ENCODE measurements at regions of chr11 and their contacts with region 1.

Region 1: DNA sequence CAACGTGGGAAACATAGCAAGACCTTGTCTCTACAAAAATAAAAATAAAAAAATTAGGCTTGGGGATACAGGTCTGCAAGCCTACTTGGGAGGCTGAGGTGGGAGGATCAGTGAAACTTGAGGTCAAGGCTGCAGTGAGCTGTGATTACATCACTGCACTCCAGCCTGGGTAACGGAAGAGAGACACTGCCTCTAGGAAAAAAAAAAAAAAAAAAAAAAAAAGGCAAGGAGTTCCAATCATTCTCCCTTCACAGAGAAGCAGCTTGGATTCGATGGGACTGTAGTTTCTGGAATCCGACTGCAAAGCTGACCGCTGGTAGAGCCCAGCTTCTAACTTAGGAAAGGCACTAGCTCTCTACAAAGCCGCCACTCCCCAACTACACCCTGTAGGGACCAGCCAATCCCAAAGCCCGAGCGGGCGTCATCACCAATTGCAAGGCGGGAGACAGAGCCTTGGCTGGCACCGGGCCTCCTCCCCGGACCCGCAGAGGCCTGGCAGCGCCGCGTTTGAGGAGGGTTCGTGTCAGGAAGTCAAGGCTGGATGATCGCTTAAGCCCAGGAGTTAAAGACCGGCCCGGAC is 699 bp upstream of the DDB2 start:
- DNase-seq: peak; percentile 64 to 85 (median 76)
- ATAC-seq: peak; percentile 86
- H3K4me3 ChIP-seq: peak overlapping the region; percentile 89
- H3K4me3 Mint-ChIP-seq: peak overlapping the region; percentile 92 to 100 (median 96)
- H3K27ac ChIP-seq: peak overlapping the region; percentile 85
- H3K27ac Mint-ChIP-seq: peak overlapping the region; percentile 96 to 100 (median 99)
- H3K4me1 ChIP-seq: peaks cover 3 to 21% of the 10 kb centered on the region in 2 donors
- H3K4me1 Mint-ChIP-seq: peaks cover 26 to 39% (median 32%) of the 10 kb centered on the region in 7 donors
- H3K27me3 ChIP-seq: no peaks in the 10 kb centered on the region
- H3K27me3 Mint-ChIP-seq: no peaks in the 10 kb centered on the region

Region 2: DNA sequence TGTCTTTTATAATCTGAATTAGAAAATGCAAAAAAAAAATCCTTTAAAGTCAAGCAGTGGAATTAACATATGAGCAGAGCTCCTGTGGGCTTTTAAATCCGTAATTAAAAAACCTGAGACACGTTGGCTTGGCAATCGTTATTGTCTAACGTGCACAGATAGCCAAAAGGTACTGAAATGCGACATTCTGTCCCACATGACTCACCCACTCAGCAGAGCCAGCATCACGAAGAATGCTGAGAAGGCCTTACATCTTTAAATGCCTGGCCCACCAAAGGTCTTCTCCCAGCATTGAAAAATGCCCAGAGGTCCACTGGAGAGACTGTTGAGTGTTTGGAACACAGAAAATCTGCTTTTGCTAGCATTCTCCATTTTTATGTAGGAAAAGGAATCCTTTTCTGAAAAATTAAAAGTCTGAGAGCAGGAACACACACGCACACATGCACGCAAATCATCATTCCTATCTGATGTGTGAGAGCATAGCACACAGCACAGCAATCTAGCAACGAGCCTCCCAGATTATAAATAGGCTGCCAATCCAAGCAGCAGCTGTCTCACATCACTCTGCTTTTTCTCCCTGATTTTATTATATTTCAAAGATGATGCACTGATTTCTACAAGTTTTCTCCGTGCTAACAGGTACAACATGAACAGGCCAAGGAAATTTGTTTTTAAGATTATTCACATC is 1187.3 kb before region 1 on chr11:
- CTCF ChIA-PET with region 1: no interaction called
- POLR2A ChIA-PET with region 1: no interaction called
- intact Hi-C with region 1: no loop called
- DNase-seq: no peak
- ATAC-seq: no peak
- H3K4me3 ChIP-seq: no peak overlapping the region
- H3K4me3 Mint-ChIP-seq: no peak overlapping the region
- H3K27ac ChIP-seq: no peak overlapping the region
- H3K27ac Mint-ChIP-seq: no peak overlapping the region
- H3K4me1 ChIP-seq: no peaks in the 10 kb centered on the region
- H3K4me1 Mint-ChIP-seq: peaks cover 0 to 9% (median 4%) of the 10 kb centered on the region in 7 donors
- H3K27me3 ChIP-seq: no peaks in the 10 kb centered on the region
- H3K27me3 Mint-ChIP-seq: no peaks in the 10 kb centered on the region

Region 3: DNA sequence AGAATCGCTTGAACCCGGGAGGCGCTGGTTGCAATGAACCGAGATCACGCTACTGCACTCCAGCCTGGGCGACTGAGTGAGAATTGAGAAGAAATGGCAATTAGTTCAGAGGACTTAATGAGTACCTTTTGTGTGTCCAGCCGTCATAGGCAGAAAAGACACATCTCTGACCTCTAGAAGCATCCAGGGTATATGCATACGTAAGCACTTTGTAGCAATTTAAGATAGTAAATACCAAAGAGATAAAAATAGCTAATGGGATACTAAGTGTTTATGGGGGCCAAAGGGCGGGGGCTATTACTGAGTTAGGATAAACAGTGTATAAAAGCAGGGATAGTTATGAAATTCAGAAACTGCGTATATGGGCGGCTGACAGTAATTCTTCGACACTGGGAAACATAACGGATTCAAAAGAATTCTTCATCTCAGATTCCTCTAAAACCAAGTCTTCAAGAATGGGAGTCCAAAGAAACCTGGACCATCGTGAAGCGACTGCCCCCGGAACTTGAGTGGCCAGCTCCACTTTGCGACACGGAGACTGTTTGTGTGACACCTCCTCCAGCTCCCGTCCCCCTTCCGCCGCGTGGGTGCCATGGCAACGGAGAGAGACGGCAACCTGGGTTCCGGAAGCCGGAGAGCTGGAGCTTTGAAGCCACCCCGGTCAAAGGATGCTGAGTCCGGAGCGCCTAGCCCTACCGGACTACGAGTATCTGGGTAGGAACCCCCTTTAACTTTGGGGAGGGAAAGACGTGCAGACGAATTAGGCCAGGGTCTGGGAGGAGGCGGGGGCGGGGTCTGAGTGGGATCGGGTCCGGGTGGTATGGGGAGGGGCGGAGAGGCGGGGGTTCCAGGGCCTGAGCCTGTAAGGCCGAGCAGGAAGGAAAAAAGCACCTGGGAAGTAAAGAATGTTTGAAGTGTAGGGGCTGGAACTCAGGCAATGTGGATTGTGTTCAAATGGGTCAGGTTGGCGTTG is 277.7 kb before region 1 on chr11 and contains the start of gene CSTPP1:
- CTCF ChIA-PET with region 1: no interaction called
- POLR2A ChIA-PET with region 1: no interaction called
- intact Hi-C with region 1: loop called (anchors 1 kb)
- DNase-seq: peak; percentile 80 to 92 (median 89)
- ATAC-seq: peak; percentile 99
- H3K4me3 ChIP-seq: peak within 1 kb of the TSS; percentile 76
- H3K4me3 Mint-ChIP-seq: peak within 1 kb of the TSS; percentile 86 to 100 (median 92)
- H3K27ac ChIP-seq: peak within 1 kb of the TSS; percentile 72
- H3K27ac Mint-ChIP-seq: peak within 1 kb of the TSS; percentile 89 to 98 (median 92)
- H3K4me1 ChIP-seq: peaks cover 0 to 11% of the 10 kb centered on the region in 2 donors
- H3K4me1 Mint-ChIP-seq: peaks cover 5 to 24% (median 21%) of the 10 kb centered on the region in 7 donors
- H3K27me3 ChIP-seq: no peaks in the 10 kb centered on the region
- H3K27me3 Mint-ChIP-seq: peaks cover 8 to 19% (median 9%) of the 10 kb centered on the region in 5 donors
- total RNA-seq, gene CSTPP1: 9.3 to 18.6 (median 16.1) TPM

Region 4: DNA sequence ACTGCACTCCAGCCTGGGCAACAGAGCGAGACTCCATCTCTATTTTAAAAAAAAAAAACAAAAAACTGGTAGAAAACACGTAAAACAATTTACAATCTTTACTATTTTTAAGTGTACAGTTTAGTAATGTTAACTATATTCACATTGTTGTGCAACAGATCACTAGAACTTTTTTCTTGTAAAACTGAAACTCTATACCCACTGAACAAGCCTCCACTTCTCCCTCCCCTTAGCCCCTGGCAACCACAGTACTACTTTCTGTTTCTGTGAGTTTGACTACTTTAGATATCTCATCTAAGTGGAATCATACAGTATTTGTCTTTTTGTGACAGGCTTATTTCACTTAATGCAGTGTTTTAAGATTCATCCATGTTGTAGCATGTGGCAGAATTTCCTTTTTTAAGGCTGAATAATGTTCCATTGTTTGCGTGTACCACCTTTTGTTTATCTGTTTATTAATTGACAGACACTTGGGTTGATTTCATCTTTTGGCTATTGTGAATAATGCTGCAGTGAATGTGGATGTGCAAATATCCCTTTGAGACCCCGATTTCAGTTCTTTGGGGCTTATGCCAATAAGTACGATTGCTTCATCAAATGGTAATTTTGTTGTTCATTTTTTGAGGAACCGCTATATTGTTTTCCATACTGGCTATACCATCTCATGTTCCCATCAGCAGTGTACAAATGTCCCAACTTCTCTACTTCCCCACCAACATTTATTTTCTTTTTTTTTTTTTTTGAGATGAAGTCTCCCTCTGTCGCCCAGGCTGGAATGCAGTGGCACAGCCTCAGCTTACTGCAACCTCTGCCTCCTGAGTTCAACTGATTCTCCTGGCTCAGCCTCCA is 11.7 kb after region 1 on chr11:
- CTCF ChIA-PET with region 1: no interaction called
- POLR2A ChIA-PET with region 1: interaction called, 5 read pairs
- intact Hi-C with region 1: loop called in 1 of 2 experiments (anchors 1 kb)
- DNase-seq: no peak
- ATAC-seq: peak; percentile 57
- H3K4me3 ChIP-seq: no peak overlapping the region
- H3K4me3 Mint-ChIP-seq: peak overlapping the region in 1 of 10 donors; percentile 70
- H3K27ac ChIP-seq: no peak overlapping the region
- H3K27ac Mint-ChIP-seq: peak overlapping the region in 3 of 9 donors; percentile 32 to 82 (median 66)
- H3K4me1 ChIP-seq: no peaks in the 10 kb centered on the region
- H3K4me1 Mint-ChIP-seq: peaks cover 0 to 28% (median 4%) of the 10 kb centered on the region in 7 donors
- H3K27me3 ChIP-seq: no peaks in the 10 kb centered on the region
- H3K27me3 Mint-ChIP-seq: no peaks in the 10 kb centered on the region

Region 5: DNA sequence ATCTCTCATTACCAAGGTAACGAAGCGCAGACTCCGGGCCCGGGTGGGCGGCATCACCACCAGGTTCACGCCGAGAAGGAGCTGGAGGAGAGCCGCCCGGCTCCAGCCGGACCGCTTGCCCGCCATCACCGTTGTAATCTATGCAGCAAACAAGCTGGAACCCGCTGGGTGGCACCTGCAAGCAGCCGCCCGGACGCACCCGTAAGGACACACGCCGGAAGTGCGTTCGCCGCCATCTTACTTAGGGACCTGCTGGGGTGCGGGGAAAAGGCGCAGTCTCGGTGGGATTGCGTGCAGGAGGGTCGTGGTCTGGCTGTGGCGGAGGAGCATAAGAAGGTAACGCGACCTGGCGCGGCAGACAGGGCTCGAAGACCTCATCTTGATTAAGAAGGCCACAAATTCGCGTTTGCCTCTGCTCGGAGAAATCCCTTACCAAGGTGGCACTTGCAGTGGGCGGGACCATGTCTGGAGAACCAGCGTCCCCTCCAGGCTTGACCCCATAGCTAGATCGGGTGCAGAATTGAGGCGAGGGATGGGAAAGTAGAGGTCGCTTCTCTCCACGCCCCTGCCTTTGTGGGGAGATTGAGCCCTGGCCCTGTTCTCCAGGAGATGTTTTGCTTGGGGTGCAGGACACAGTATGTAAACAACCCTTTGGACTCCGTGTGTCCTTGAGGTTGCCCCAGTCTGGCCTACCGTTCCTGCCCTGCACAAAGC is 34.7 kb after region 1 on chr11 and contains the start of gene ACP2:
- CTCF ChIA-PET with region 1: interaction called, 15 read pairs
- POLR2A ChIA-PET with region 1: interaction called, 63 read pairs
- intact Hi-C with region 1: loop called (anchors 1 kb)
- DNase-seq: peak; percentile 83 to 91 (median 86)
- ATAC-seq: peak; percentile 99
- H3K4me3 ChIP-seq: peak within 1 kb of the TSS; percentile 93
- H3K4me3 Mint-ChIP-seq: peak within 1 kb of the TSS; percentile 93 to 100 (median 98)
- H3K27ac ChIP-seq: peak within 1 kb of the TSS; percentile 87
- H3K27ac Mint-ChIP-seq: peak within 1 kb of the TSS; percentile 94 to 100 (median 98)
- H3K4me1 ChIP-seq: peaks cover 11 to 15% of the 10 kb centered on the region in 2 donors
- H3K4me1 Mint-ChIP-seq: peaks cover 13 to 39% (median 29%) of the 10 kb centered on the region in 7 donors
- H3K27me3 ChIP-seq: no peaks in the 10 kb centered on the region
- H3K27me3 Mint-ChIP-seq: no peaks in the 10 kb centered on the region
- total RNA-seq, gene ACP2: 17.6 to 38.1 (median 24.3) TPM

Region 6: DNA sequence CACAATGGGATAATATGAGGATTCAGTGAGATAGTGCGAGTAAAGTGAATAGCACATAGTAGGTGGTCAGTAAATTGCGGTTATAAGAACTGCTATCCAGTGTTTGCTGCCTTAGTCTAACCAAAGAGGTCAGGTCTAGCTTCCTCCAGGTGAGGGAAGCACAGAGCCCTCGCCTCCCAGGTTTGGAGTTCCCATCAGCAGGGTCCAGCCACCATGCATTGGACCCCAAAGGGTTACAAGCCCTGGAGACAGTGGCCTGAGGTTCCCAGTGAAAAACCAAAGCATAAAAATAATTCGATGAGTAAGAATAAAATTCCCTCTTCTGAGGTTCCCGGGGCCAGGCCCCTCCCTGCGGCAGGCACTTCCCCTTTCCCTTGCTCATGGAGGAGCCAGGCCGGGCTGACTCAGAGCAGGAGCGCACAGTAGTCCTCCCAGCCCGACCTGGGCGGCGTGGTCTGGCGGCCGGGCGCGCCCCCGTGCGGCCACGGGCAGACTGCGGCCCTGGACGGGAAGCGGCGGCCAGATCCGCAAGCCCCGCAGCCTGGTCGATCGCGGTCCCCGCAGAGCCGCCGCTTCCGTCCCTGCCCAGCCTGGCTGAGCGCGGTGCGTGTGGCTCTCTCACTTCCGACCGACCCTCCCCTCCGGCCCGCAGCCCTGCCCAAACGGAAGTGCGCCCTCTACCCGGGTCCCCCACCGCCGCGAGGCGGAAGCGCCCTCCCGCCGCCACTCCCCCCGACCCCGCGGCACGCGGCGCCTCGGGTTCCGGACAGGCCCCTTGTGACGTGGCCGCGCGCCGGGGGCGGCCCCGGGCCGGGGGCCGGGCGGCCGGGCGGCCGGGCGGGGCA is 193.9 kb after region 1 on chr11 and contains the start of gene SLC39A13:
- CTCF ChIA-PET with region 1: no interaction called
- POLR2A ChIA-PET with region 1: interaction called, 3 read pairs
- intact Hi-C with region 1: loop called (anchors 1 to 10 kb)
- DNase-seq: peak; percentile 80 to 99 (median 88)
- ATAC-seq: peak; percentile 91
- H3K4me3 ChIP-seq: peak within 1 kb of the TSS; percentile 71
- H3K4me3 Mint-ChIP-seq: peak within 1 kb of the TSS; percentile 87 to 99 (median 91)
- H3K27ac ChIP-seq: peak within 1 kb of the TSS; percentile 83
- H3K27ac Mint-ChIP-seq: peak within 1 kb of the TSS; percentile 90 to 98 (median 94)
- H3K4me1 ChIP-seq: peaks cover 8 to 13% of the 10 kb centered on the region in 2 donors
- H3K4me1 Mint-ChIP-seq: peaks cover 4 to 23% (median 21%) of the 10 kb centered on the region in 7 donors
- H3K27me3 ChIP-seq: no peaks in the 10 kb centered on the region
- H3K27me3 Mint-ChIP-seq: no peaks in the 10 kb centered on the region
- total RNA-seq, gene SLC39A13: 29.9 to 60.4 (median 45.1) TPM

Region 7: GRCh38 chr11:47466701-47467250 is 252.7 kb after region 1 on chr11:
- CTCF ChIA-PET with region 1: no interaction called
- POLR2A ChIA-PET with region 1: no interaction called
- intact Hi-C with region 1: no loop called
- DNase-seq: no peak
- ATAC-seq: no peak
- H3K4me3 ChIP-seq: no peak overlapping the region
- H3K4me3 Mint-ChIP-seq: no peak overlapping the region
- H3K27ac ChIP-seq: no peak overlapping the region
- H3K27ac Mint-ChIP-seq: peak overlapping the region in 6 of 9 donors; percentile 19 to 65 (median 36)
- H3K4me1 ChIP-seq: no peaks in the 10 kb centered on the region
- H3K4me1 Mint-ChIP-seq: peaks cover 0 to 12% (median 9%) of the 10 kb centered on the region in 7 donors
- H3K27me3 ChIP-seq: no peaks in the 10 kb centered on the region
- H3K27me3 Mint-ChIP-seq: no peaks in the 10 kb centered on the region

Region 8: GRCh38 chr11:47578524-47579460 is 364.7 kb after region 1 on chr11 and contains the starts of genes KBTBD4 and NDUFS3:
- CTCF ChIA-PET with region 1: no interaction called
- POLR2A ChIA-PET with region 1: no interaction called
- intact Hi-C with region 1: loop called in 1 of 2 experiments (anchors 1 kb)
- DNase-seq: peak; percentile 85 to 95 (median 88)
- ATAC-seq: peak; percentile 97
- H3K4me3 ChIP-seq: peak within 1 kb of the TSS; percentile 95
- H3K4me3 Mint-ChIP-seq: peak within 1 kb of the TSS; percentile 95 to 100 (median 99)
- H3K27ac ChIP-seq: peak within 1 kb of the TSS; percentile 80
- H3K27ac Mint-ChIP-seq: peak within 1 kb of the TSS; percentile 97 to 100 (median 99)
- H3K4me1 ChIP-seq: peaks cover 26 to 28% of the 10 kb centered on the region in 2 donors
- H3K4me1 Mint-ChIP-seq: peaks cover 17 to 51% (median 41%) of the 10 kb centered on the region in 7 donors
- H3K27me3 ChIP-seq: no peaks in the 10 kb centered on the region
- H3K27me3 Mint-ChIP-seq: no peaks in the 10 kb centered on the region
- total RNA-seq, gene KBTBD4: 15.0 to 26.5 (median 20.9) TPM
- total RNA-seq, gene NDUFS3: 68.6 to 116 (median 85.2) TPM

Region 9: GRCh38 chr11:47766305-47767227 is 552.5 kb after region 1 on chr11:
- CTCF ChIA-PET with region 1: no interaction called
- POLR2A ChIA-PET with region 1: interaction called, 6 read pairs
- intact Hi-C with region 1: loop called in 1 of 2 experiments (anchors 1 kb)
- DNase-seq: peak; percentile 60 to 84 (median 79)
- ATAC-seq: peak; percentile 52
- H3K4me3 ChIP-seq: peak overlapping the region; percentile 94
- H3K4me3 Mint-ChIP-seq: peak overlapping the region; percentile 88 to 100 (median 96)
- H3K27ac ChIP-seq: peak overlapping the region; percentile 97
- H3K27ac Mint-ChIP-seq: peak overlapping the region; percentile 96 to 100 (median 99)
- H3K4me1 ChIP-seq: peaks cover 20 to 22% of the 10 kb centered on the region in 2 donors
- H3K4me1 Mint-ChIP-seq: peaks cover 16 to 39% (median 23%) of the 10 kb centered on the region in 7 donors
- H3K27me3 ChIP-seq: no peaks in the 10 kb centered on the region
- H3K27me3 Mint-ChIP-seq: no peaks in the 10 kb centered on the region

Measured in naive thymus-derived CD4-positive, alpha-beta T cell (primary cell).